Left cardiac atrium (tissue), 4 donors: ENCODE measurements at regions of chr3 and their contacts with region 1.

Region 1: GRCh38 chr3:71130471-71131374 is 452.8 kb downstream of the FOXP1 start:
- DNase-seq: peak; percentile 70
- ATAC-seq: peak; percentile 72 to 74

Region 2: GRCh38 chr3:71201939-71202338 is 71.2 kb after region 1 on chr3:
- intact Hi-C with region 1: loop called in 1 of 2 experiments (anchors 10 kb)
- DNase-seq: peak; percentile 80
- ATAC-seq: peak; percentile 84 to 86

Region 3: DNA sequence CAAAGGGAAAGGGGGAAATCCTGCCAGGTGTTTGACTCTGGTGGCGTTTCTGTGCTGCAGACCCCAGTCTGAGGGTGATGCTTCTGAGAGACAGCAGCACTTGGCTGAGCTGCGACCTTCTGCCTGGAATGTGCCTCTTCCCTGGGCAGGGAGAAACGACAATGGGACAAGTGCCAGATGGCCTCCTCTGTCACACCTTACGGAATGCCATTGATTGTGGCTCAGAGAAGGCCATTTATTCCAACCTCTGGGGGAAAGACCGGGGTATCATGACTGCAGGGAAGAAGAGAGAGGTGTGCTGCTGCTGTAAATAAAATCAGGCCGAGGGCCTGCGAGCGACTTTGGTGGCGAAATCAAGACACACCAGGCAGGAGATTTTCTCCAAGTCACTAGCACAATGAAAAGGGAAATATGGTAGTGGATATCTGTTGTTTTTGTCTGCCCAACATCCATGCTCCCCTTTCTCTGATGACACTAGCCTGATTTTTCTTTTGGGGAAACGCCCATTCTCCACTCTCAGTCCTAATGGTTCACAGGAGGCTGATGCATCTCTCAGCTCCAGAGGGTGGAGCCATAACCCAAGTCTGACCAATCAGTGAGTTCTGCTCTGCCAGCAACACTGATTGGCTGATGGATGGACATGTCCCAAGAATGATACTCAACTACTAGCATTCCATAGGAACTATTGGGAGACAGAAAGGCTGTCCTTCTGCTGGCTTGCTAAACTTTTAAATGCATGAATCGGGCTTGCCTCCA is 116.7 kb after region 1 on chr3:
- intact Hi-C with region 1: loop called in 1 of 2 experiments (anchors 5 kb)
- DNase-seq: peak; percentile 44
- ATAC-seq: peak; percentile 42 to 59